K562 (cell line): ENCODE measurements at regions of chr7 and their contacts with region 1.

Region 1: GRCh38 chr7:32390210-32390609 is 100.0 kb downstream of the LSM5 start:
- DNase-seq: peak in 1 of 4 experiments; percentile 6
- ATAC-seq: no peak
- H3K4me3 ChIP-seq: no peak overlapping the region
- H3K27ac ChIP-seq: no peak overlapping the region
- H3K4me1 ChIP-seq: no peaks in the 10 kb centered on the region
- H3K27me3 ChIP-seq: no peaks in the 10 kb centered on the region
- CTCF ChIP-seq: peak in 2 of 3 experiments; percentile 20 to 31; a peak in 2 of 6 replicates
- EP300 ChIP-seq: no peak
- POLR2A ChIP-seq: no peak
- RAD21 ChIP-seq: no peak

Region 2: DNA sequence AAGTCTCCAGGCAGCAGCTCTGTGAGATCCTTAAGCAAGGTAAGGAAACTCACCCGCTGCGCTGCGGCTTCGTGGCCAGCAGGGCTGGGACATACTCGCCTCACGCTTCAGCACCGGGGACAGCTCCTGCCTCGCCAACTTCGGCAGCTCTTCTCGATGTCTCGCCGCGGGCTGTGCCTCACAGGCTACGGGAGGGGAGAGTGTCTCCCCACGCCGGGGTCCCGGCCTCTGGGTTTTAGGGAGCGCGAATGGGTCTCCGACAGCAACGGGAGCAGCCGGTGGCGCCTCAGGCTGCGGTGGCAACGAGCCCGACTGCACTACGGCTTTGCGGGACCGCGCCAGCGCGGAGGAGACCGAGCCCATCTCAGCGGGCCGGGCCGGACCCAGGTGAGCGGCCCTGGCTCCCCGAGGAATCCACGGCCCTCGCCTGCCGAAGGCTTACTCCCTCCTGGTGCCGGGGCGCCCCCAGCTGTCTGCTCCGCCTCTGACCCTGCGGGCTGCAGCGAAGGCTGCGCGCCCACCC is 37.6 kb after region 1 on chr7:
- CTCF ChIA-PET with region 1: no interaction called
- POLR2A ChIA-PET with region 1: no interaction called
- in situ Hi-C with region 1: no loop called
- intact Hi-C with region 1: loop called (anchors 2 kb)
- DNase-seq: peak; percentile 70 to 85 (median 71)
- ATAC-seq: peak; percentile 100
- H3K4me3 ChIP-seq: no peak overlapping the region
- H3K27ac ChIP-seq: no peak overlapping the region
- H3K4me1 ChIP-seq: peaks cover 0 to 6% of the 10 kb centered on the region in 2 experiments; a peak in 1 of 5 replicates
- H3K27me3 ChIP-seq: peaks cover 2 to 10% of the 10 kb centered on the region in 2 experiments; a peak in 3 of 5 replicates
- CTCF ChIP-seq: peak; percentile 36 to 51 (median 49); a peak in 5 of 6 replicates
- EP300 ChIP-seq: no peak
- POLR2A ChIP-seq: no peak
- RAD21 ChIP-seq: no peak